ENCODE measurements at regions of chr1 and their contacts with region 1.

Region 1: GRCh38 chr1:114581335-114582287 is at the start of gene BCAS2:
- DNase-seq: peak; percentile 98
- ATAC-seq: peak; percentile 95
- H3K4me3 ChIP-seq: peak within 1 kb of the TSS; percentile 59 to 91 (median 85)
- H3K4me3 Mint-ChIP-seq: peak within 1 kb of the TSS; percentile 99
- H3K27ac ChIP-seq: peak within 1 kb of the TSS; percentile 87 to 95
- H3K27ac Mint-ChIP-seq: peak within 1 kb of the TSS; percentile 99
- H3K4me1 ChIP-seq: peaks cover 15 to 18% of the 10 kb centered on the region in 2 donors
- H3K4me1 Mint-ChIP-seq: peaks cover 30% of the 10 kb centered on the region
- H3K27me3 ChIP-seq: no peaks in the 10 kb centered on the region
- H3K27me3 Mint-ChIP-seq: no peaks in the 10 kb centered on the region
- CTCF ChIP-seq: no peak
- total RNA-seq, gene BCAS2: 27.6 and 30.6 TPM in 2 replicates

Region 2: DNA sequence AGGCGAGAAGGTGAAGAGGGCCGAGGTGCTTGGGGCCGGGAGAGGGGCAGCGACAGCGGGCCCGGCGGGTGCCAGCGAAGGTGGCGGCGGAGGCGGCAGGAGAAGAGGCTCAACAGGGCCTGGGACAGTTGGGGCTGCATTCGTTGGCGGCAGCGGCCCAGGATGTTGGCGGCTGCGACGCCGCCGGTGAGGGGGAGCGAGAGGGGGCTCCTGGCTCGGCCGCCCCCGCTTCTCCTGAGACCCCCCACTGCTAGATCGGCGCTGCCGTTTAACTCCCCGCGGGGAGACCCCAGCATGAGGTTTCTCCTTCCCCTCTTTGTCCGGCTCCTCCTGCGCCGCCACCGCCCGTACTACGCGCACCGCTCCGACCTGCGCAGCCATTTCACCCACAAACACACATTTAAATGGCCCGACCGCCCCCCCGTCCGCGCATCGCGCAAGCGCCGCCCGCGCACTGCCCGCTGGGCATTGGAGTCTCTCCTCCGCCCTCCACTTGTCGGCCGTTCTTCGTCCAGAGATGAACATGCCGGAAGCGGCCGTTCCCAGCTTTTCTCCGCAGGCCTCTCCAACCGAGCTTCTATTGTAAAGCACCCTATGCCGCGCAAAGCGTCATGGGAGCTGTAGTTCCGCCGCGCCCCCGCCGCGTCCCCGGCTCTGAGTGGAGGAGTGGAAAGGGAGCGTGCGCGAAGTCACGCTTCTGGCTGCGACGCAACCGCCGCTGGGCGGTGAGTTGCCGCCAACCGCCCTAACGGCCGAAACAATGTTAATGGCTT is 769.5 kb before region 1 on chr1 and contains the start of gene RSBN1:
- CTCF ChIA-PET with region 1: no interaction called
- POLR2A ChIA-PET with region 1: no interaction called
- intact Hi-C with region 1: loop called (anchors 1 kb)
- DNase-seq: peak; percentile 99
- ATAC-seq: peak; percentile 94
- H3K4me3 ChIP-seq: peak within 1 kb of the TSS; percentile 78 to 91 (median 83)
- H3K4me3 Mint-ChIP-seq: peak within 1 kb of the TSS; percentile 98
- H3K27ac ChIP-seq: peak within 1 kb of the TSS; percentile 86 to 93
- H3K27ac Mint-ChIP-seq: peak within 1 kb of the TSS; percentile 98
- H3K4me1 ChIP-seq: peaks cover 27 to 28% of the 10 kb centered on the region in 2 donors
- H3K4me1 Mint-ChIP-seq: peaks cover 39% of the 10 kb centered on the region
- H3K27me3 ChIP-seq: no peaks in the 10 kb centered on the region
- H3K27me3 Mint-ChIP-seq: no peaks in the 10 kb centered on the region
- CTCF ChIP-seq: peak; percentile 2
- total RNA-seq, gene RSBN1: 40.2 and 41.5 TPM in 2 replicates

Region 3: GRCh38 chr1:113928941-113929749 is 652.5 kb before region 1 on chr1 and contains the start of gene HIPK1:
- CTCF ChIA-PET with region 1: no interaction called
- POLR2A ChIA-PET with region 1: no interaction called
- intact Hi-C with region 1: loop called (anchors 1 kb)
- DNase-seq: peak; percentile 96
- ATAC-seq: peak; percentile 75
- H3K4me3 ChIP-seq: peak within 1 kb of the TSS; percentile 76 to 92 (median 86)
- H3K4me3 Mint-ChIP-seq: peak within 1 kb of the TSS; percentile 100
- H3K27ac ChIP-seq: peak within 1 kb of the TSS; percentile 98 to 99
- H3K27ac Mint-ChIP-seq: peak within 1 kb of the TSS; percentile 100
- H3K4me1 ChIP-seq: peaks cover 33 to 35% of the 10 kb centered on the region in 2 donors
- H3K4me1 Mint-ChIP-seq: peaks cover 49% of the 10 kb centered on the region
- H3K27me3 ChIP-seq: no peaks in the 10 kb centered on the region
- H3K27me3 Mint-ChIP-seq: no peaks in the 10 kb centered on the region
- CTCF ChIP-seq: no peak
- total RNA-seq, gene HIPK1: 48.0 and 48.2 TPM in 2 replicates

Region 4: DNA sequence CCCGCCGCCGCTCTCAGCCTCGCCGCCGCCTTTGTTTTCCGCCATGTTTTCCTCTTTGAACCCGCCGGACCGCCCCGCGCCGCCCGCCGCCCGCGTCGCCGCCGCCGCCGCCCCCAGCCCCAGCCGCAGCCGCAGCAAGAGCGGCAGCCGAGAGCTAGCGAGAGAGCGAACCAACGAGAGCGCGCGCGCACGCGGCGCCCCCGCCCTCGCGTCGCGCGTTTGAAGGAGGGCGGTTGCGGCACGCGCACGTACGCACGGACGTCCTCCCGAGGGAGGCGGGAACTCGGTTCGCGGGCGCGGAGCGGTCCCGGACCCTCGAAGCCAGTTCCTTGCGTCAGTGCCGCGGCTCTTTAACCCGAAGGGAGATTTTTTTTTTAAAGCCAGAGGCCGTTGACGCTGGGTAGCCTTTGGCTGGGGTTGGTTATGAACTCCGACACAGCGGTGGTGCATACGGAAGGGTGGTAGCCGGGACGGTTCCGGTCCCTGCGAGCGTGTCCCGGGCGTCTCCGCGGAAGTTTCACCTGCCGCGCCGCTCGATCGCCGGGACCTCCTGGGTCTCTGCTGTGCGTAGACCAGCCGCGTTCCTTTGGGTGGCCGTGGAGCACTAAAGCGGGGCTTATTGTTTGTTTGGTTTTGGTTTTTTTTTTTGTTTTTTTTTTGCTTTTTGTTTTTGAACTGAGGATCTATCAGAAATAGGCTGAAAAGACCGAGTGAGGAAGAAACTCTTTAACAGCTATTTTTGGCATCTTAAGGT is 70.4 kb before region 1 on chr1 and contains the start of gene TRIM33:
- CTCF ChIA-PET with region 1: no interaction called
- POLR2A ChIA-PET with region 1: interaction called, 5 read pairs
- intact Hi-C with region 1: loop called (anchors 1 kb)
- DNase-seq: peak; percentile 97
- ATAC-seq: peak; percentile 75
- H3K4me3 ChIP-seq: peak within 1 kb of the TSS; percentile 67 to 98 (median 95)
- H3K4me3 Mint-ChIP-seq: peak within 1 kb of the TSS; percentile 91
- H3K27ac ChIP-seq: peak within 1 kb of the TSS; percentile 98 to 100
- H3K27ac Mint-ChIP-seq: peak within 1 kb of the TSS; percentile 98
- H3K4me1 ChIP-seq: peaks cover 36 to 41% of the 10 kb centered on the region in 2 donors
- H3K4me1 Mint-ChIP-seq: peaks cover 50% of the 10 kb centered on the region
- H3K27me3 ChIP-seq: no peaks in the 10 kb centered on the region
- H3K27me3 Mint-ChIP-seq: no peaks in the 10 kb centered on the region
- CTCF ChIP-seq: no peak
- total RNA-seq, gene TRIM33: 61.0 and 67.3 TPM in 2 replicates

Region 5: DNA sequence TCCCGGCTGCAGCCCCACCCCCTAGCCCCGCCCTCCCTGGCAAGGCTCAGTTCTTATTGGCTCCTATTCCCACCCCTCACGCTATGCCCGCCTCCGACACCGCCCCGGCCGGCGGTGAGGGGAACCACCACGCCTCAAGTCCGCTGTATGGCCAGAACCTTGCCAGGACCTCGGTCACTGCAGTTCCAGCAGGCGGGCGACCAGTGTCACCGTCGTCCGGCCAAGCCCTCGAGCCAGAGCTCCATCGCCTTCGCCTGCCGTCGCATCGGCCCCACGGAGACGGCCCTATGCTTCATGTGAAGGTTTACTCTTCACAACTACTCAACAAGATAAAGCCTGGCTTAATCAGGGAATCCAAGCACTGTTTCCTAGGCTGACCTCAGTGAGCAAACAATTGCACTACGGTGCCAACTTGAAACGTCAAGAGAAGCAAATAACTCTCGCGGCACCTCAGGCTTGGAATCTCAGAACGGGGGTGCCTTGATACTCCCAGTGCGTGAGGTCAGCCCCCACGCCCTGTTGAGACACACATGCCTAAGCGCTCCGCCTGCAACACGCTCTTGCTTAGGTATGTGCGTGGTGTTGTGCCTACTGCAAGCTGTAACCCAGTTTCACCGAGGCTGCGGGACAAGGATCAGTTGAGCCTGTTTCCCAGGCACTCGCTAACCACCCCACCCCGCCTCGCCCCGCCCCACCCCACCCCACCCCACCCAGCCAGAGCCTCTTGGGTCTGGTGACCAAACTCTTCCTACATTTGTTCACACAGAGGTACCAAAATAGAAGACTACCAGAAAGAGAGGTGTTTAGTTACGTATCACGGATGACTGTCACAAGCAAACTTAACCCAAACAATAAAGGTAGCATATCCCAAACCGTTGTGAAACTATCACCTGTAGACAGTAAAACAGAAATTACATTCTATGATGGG is 88.7 kb after region 1 on chr1:
- CTCF ChIA-PET with region 1: no interaction called
- POLR2A ChIA-PET with region 1: no interaction called
- intact Hi-C with region 1: loop called (anchors 1 kb)
- DNase-seq: peak; percentile 91
- ATAC-seq: peak; percentile 99
- H3K4me3 ChIP-seq: peak overlapping the region; percentile 65 to 84 (median 72)
- H3K4me3 Mint-ChIP-seq: peak overlapping the region; percentile 99
- H3K27ac ChIP-seq: no peak overlapping the region
- H3K27ac Mint-ChIP-seq: peak overlapping the region; percentile 73
- H3K4me1 ChIP-seq: peaks cover 6 to 14% of the 10 kb centered on the region in 2 donors
- H3K4me1 Mint-ChIP-seq: peaks cover 14% of the 10 kb centered on the region
- H3K27me3 ChIP-seq: peaks cover 0 to 6% (median 0%) of the 10 kb centered on the region in 4 experiments
- H3K27me3 Mint-ChIP-seq: peaks cover 45% of the 10 kb centered on the region
- CTCF ChIP-seq: no peak

Region 6: GRCh38 chr1:114757455-114758250 is 176.0 kb after region 1 on chr1 and contains the start of gene CSDE1:
- CTCF ChIA-PET with region 1: no interaction called
- POLR2A ChIA-PET with region 1: no interaction called
- intact Hi-C with region 1: loop called (anchors 1 kb)
- DNase-seq: peak; percentile 98
- ATAC-seq: peak; percentile 89
- H3K4me3 ChIP-seq: peak within 1 kb of the TSS; percentile 81 to 100 (median 100)
- H3K4me3 Mint-ChIP-seq: peak within 1 kb of the TSS; percentile 100
- H3K27ac ChIP-seq: peak within 1 kb of the TSS; percentile 99 to 100
- H3K27ac Mint-ChIP-seq: peak within 1 kb of the TSS; percentile 100
- H3K4me1 ChIP-seq: peaks cover 45 to 46% of the 10 kb centered on the region in 2 donors
- H3K4me1 Mint-ChIP-seq: peaks cover 56% of the 10 kb centered on the region
- H3K27me3 ChIP-seq: no peaks in the 10 kb centered on the region
- H3K27me3 Mint-ChIP-seq: no peaks in the 10 kb centered on the region
- CTCF ChIP-seq: no peak
- total RNA-seq, gene CSDE1: 443 and 454 TPM in 2 replicates